Uterus (tissue), 4 donors: ENCODE measurements at regions of chr18 and their contacts with region 1.

Region 1: DNA sequence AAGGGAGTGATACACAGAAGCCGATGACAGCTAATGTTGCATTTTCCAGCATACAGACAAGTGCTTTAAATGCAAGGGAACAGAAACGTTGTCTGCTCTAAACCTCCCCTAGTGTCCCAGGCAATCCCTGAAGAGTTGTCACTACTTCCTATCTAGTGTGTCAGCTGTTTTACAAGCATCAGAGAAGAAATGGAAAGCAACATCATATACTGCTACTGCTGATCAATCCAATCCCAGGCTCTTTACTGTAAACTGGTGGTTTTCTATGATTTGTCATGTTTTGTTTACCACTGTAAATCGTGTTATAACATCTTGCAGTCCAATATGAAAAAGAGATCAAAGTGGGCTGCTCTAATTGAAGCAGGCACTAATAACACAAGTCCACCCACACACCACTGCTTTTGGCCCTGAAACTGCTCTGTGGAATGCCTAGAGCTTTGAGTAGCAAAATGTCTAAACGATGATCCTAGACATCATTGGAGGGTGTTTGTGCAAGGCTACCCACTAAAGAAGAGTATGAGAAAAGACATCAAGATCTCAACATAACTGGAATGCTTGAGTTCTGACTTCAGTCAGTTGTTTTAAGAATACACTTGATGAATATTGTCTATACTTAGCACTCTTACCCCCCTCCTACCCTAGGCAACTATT is 18.1 kb upstream of the ROCK1 start:
- DNase-seq: no peak
- H3K4me3 ChIP-seq: no peak overlapping the region
- H3K27ac ChIP-seq: no peak overlapping the region
- H3K4me1 ChIP-seq: no peaks in the 10 kb centered on the region
- H3K27me3 ChIP-seq: no peaks in the 10 kb centered on the region
- CTCF ChIP-seq: no peak
- POLR2A ChIP-seq: no peak

Region 2: GRCh38 chr18:21179590-21180220 is 50.0 kb after region 1 on chr18:
- intact Hi-C with region 1: loop called (anchors 10 kb)
- DNase-seq: peak; percentile 37 to 57
- H3K4me3 ChIP-seq: no peak overlapping the region
- H3K27ac ChIP-seq: no peak overlapping the region
- H3K4me1 ChIP-seq: no peaks in the 10 kb centered on the region
- H3K27me3 ChIP-seq: no peaks in the 10 kb centered on the region
- CTCF ChIP-seq: peak; percentile 65 to 71 (median 66)
- POLR2A ChIP-seq: no peak

Region 3: GRCh38 chr18:21242141-21242779 is 112.6 kb after region 1 on chr18 and contains the start of gene GREB1L:
- intact Hi-C with region 1: no loop called
- DNase-seq: peak in 1 of 2 donors; percentile 33
- H3K4me3 ChIP-seq: peak within 1 kb of the TSS; percentile 40 to 74
- H3K27ac ChIP-seq: peak within 1 kb of the TSS; percentile 46 to 63
- H3K4me1 ChIP-seq: no peaks in the 10 kb centered on the region
- H3K27me3 ChIP-seq: no peaks in the 10 kb centered on the region
- CTCF ChIP-seq: peak in 2 of 4 experiments; percentile 14 to 17
- POLR2A ChIP-seq: peak; percentile 11 to 28
- total RNA-seq, gene GREB1L: 4.1 to 15.3 (median 9.2) TPM

Region 4: DNA sequence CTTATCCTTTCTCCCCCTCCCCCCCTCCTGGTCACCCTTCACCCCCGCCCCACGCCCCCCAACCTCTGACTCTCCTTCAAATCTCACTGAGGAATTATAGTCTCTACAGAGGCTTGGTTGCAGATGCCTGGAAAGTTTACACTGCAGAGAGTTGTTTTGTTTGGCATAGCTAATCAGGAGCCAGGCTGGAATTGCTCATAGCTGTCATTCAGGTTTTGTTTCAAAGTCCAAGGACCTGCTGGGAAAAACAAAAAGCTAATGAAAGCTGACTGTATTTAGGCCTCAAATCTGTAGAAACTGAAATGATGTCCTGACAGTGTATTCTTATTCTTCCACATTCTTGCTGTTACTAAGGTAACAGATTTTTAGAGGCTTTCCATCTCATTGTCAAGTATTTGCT is 135.0 kb after region 1 on chr18:
- intact Hi-C with region 1: no loop called
- DNase-seq: no peak
- H3K4me3 ChIP-seq: no peak overlapping the region
- H3K27ac ChIP-seq: no peak overlapping the region
- H3K4me1 ChIP-seq: no peaks in the 10 kb centered on the region
- H3K27me3 ChIP-seq: no peaks in the 10 kb centered on the region
- CTCF ChIP-seq: no peak
- POLR2A ChIP-seq: no peak